ENCODE measurements at regions of chr10 and their contacts with region 1.

Region 1: DNA sequence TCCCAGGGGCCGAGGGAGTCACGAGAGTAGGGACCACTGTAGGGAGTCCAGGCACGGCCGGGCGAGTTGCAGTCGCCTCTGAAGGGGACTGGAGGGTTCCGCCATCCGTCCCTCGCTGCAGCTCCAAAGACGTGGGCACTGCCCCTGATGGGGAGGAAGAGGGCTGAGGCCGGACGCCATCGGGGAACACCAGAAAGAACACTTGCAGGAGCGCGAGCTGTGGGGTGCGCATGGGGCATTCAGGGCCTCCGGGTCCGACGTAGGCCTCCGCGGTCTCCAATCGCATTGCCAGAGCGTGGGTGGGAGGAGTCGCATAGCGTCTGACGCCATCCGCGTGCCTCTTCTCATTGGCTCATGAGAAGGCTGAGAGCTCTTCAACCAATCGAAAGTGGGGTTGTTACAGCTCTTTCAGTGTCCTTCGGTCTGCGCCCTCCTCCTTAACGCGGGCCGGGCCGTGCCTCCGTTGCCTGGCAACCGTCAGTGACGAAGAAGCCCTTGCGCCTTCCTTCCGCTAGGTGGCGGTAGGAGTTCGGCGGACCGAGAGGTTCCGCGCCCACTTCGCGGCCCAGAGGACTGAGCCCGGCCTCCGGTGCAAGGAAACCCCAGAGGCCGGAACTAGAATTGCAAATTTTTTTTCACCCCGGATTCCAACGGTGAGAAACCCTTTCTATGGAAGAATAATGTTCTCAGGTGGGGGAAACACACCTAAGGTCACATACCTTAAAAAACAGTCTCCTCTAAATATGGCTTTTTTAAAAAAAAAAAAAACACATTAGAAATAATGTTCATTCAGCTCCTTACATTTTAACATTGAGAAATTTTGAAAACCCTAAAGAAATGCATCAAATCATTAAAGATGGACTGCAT is at the start of gene TCTN3:
- DNase-seq: peak; percentile 98
- ATAC-seq: peak; percentile 100
- H3K4me3 ChIP-seq: peak within 1 kb of the TSS; percentile 70 to 71
- H3K27ac ChIP-seq: peak within 1 kb of the TSS in 1 of 2 donors; percentile 49
- H3K4me1 ChIP-seq: peaks cover 0 to 3% of the 10 kb centered on the region in 2 donors
- H3K27me3 ChIP-seq: no peaks in the 10 kb centered on the region
- total RNA-seq, gene TCTN3: 20.8 to 23.7 TPM

Region 2: GRCh38 chr10:95745501-95745900 is 51.6 kb after region 1 on chr10:
- intact Hi-C with region 1: loop called in 1 of 2 experiments (anchors 5 kb)
- DNase-seq: no peak
- ATAC-seq: no peak
- H3K4me3 ChIP-seq: no peak overlapping the region
- H3K27ac ChIP-seq: no peak overlapping the region
- H3K4me1 ChIP-seq: no peaks in the 10 kb centered on the region
- H3K27me3 ChIP-seq: no peaks in the 10 kb centered on the region

Region 3: DNA sequence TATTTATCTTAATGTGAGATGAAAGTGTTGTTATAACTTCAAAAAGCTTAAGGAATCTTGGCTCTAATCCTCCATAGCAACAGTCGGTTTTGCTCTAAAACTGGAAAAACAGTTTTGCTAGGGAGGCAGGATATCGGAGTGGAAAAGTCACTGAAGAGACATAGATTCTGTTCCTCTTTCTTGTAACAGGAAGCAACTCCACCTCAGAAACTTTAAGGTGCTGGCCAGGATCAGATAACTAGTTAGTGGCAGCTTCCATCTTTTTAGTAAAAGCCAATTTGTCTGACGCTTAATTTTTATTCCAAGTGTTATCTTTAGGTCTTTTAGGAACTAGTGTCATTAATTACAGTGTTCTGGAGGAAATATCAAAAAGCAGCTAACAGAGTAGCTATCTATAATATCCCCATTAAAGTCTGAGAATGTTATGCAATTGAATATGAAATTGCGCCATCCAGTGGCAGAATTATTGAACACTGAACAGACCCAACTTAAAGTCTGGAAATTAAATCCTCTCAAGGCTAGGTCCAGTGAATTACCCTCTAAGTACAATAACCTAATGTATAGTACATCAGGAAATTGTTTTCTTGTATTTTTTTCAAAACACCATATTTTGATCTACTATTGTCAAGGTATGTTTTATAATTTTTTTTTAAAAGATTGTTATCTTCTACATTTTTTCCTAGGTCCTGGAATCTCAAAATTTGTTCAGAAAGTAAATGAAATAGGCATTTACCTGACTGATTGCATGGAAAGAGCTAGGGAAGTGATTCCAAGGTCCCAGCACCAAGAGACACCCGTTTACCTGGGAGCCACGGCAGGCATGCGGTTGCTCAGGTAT is 148.0 kb after region 1 on chr10:
- intact Hi-C with region 1: loop called (anchors 1 to 2 kb)
- DNase-seq: no peak
- ATAC-seq: peak; percentile 83
- H3K4me3 ChIP-seq: no peak overlapping the region
- H3K27ac ChIP-seq: peak overlapping the region in 1 of 2 donors; percentile 25
- H3K4me1 ChIP-seq: no peaks in the 10 kb centered on the region
- H3K27me3 ChIP-seq: no peaks in the 10 kb centered on the region

Region 4: GRCh38 chr10:95864906-95865813 is 171.3 kb after region 1 on chr10:
- intact Hi-C with region 1: loop called (anchors 1 to 2 kb)
- DNase-seq: no peak
- ATAC-seq: peak; percentile 86
- H3K4me3 ChIP-seq: no peak overlapping the region
- H3K27ac ChIP-seq: no peak overlapping the region
- H3K4me1 ChIP-seq: no peaks in the 10 kb centered on the region
- H3K27me3 ChIP-seq: no peaks in the 10 kb centered on the region

Region 5: GRCh38 chr10:95880704-95881103 is 186.8 kb after region 1 on chr10:
- intact Hi-C with region 1: no loop called
- DNase-seq: no peak
- ATAC-seq: peak; percentile 22
- H3K4me3 ChIP-seq: no peak overlapping the region
- H3K27ac ChIP-seq: peak overlapping the region; percentile 88 to 96
- H3K4me1 ChIP-seq: peaks cover 0 to 7% of the 10 kb centered on the region in 2 donors
- H3K27me3 ChIP-seq: no peaks in the 10 kb centered on the region

Region 6: GRCh38 chr10:95998255-95998784 is 304.4 kb after region 1 on chr10:
- intact Hi-C with region 1: no loop called
- DNase-seq: no peak
- ATAC-seq: no peak
- H3K4me3 ChIP-seq: no peak overlapping the region
- H3K27ac ChIP-seq: no peak overlapping the region
- H3K4me1 ChIP-seq: no peaks in the 10 kb centered on the region
- H3K27me3 ChIP-seq: no peaks in the 10 kb centered on the region